ENCODE measurements at regions of chr5 and their contacts with region 1.

Region 1: GRCh38 chr5:59367791-59368394 is 525.6 kb downstream of the PDE4D start:
- DNase-seq: peak in 1 of 2 donors; percentile 50
- ATAC-seq: peak; percentile 57 to 63
- H3K4me3 ChIP-seq: no peak overlapping the region
- H3K27ac ChIP-seq: peak overlapping the region in 3 of 4 donors; percentile 82 to 86 (median 84)
- H3K4me1 ChIP-seq: peaks cover 44 to 46% of the 10 kb centered on the region in 2 donors
- H3K27me3 ChIP-seq: no peaks in the 10 kb centered on the region
- CTCF ChIP-seq: peak; percentile 44 to 75 (median 66)
- POLR2A ChIP-seq: no peak

Region 2: DNA sequence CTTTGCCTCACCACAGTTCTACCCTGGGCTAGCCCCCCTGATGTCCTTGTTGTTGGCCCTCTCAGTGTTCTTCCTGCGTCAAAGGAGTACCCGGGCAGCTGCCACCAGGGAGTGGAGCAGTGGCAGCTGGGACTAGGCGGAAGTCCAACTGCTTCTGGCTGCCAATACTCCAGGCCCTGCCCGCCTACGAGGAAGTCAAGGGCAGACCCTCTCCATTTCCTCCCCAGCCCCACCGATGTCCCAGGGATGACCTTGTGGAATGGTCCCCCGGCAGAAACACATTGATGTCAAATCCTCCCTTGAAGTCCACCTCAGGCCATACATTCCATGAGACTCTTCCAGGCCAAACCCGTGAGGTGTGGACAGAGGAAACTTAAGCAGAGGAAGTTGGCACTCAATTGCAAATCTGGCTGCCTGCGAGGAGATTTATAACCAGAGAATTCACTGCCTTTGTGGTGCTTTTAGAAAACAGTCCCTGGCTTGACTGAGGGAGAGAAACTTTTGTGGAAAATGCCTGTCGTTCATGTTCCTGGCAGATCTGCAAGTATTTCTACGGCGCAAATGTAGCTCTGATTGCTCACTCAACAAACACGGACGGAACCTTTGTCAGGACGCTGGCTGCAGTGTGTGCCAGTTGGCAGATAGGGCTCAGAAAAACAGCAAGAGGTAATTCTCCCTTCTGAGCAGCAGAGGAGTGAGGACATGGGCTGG is 445.3 kb before region 1 on chr5:
- in situ Hi-C with region 1: loop called in 1 of 4 experiments (anchors 25 kb)
- intact Hi-C with region 1: no loop called
- DNase-seq: peak; percentile 75 to 94
- ATAC-seq: peak; percentile 91 to 93
- H3K4me3 ChIP-seq: peak overlapping the region; percentile 33 to 40 (median 38)
- H3K27ac ChIP-seq: peak overlapping the region; percentile 90 to 95 (median 92)
- H3K4me1 ChIP-seq: peaks cover 61% of the 10 kb centered on the region in 2 donors
- H3K27me3 ChIP-seq: no peaks in the 10 kb centered on the region
- CTCF ChIP-seq: peak in 1 of 5 experiments; percentile 12
- POLR2A ChIP-seq: peak in 1 of 2 donors; percentile 20

Region 3: DNA sequence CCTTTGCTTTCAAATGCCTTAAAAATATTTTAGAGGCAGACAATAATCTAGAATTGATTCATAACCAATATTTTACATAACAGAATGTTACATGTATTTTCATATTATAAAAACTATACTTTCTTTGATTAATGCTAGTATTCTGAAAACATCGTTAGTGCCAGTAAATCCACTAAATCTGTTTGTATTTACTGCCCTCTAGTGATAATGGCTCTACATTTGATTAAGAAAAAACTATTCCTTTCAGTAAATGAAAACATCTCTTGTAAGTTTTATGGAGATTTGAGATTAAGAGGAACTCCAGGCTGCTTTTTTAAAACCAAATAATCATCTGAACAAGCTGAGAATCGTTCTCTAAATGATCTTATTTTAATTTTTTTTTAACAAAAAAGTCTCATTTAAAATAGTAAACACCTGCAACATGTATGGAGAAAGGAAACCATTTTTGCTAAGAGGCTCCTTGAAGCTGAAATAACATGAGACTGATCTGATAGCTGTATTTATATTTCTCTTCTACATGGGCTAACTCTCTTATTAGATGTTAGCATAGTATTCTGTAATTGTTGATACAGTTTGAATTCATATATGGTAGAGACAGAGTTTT is 360.3 kb before region 1 on chr5:
- in situ Hi-C with region 1: no loop called
- intact Hi-C with region 1: loop called (anchors 10 kb)
- DNase-seq: no peak
- ATAC-seq: no peak
- H3K4me3 ChIP-seq: no peak overlapping the region
- H3K27ac ChIP-seq: peak overlapping the region; percentile 58 to 79 (median 68)
- H3K4me1 ChIP-seq: peaks cover 69 to 76% of the 10 kb centered on the region in 2 donors
- H3K27me3 ChIP-seq: no peaks in the 10 kb centered on the region
- CTCF ChIP-seq: peak in 3 of 5 experiments; percentile 36 to 49 (median 46)
- POLR2A ChIP-seq: no peak

Region 4: GRCh38 chr5:59039296-59040023 is 328.4 kb before region 1 on chr5:
- in situ Hi-C with region 1: loop called (anchors 25 kb)
- intact Hi-C with region 1: loop called (anchors 5 kb)
- DNase-seq: peak; percentile 53 to 74
- ATAC-seq: peak; percentile 24 to 35
- H3K4me3 ChIP-seq: peak overlapping the region; percentile 75 to 93 (median 79)
- H3K27ac ChIP-seq: peak overlapping the region; percentile 83 to 93 (median 91)
- H3K4me1 ChIP-seq: peaks cover 48 to 71% of the 10 kb centered on the region in 2 donors
- H3K27me3 ChIP-seq: no peaks in the 10 kb centered on the region
- CTCF ChIP-seq: no peak
- POLR2A ChIP-seq: peak; percentile 65 to 76

Region 5: DNA sequence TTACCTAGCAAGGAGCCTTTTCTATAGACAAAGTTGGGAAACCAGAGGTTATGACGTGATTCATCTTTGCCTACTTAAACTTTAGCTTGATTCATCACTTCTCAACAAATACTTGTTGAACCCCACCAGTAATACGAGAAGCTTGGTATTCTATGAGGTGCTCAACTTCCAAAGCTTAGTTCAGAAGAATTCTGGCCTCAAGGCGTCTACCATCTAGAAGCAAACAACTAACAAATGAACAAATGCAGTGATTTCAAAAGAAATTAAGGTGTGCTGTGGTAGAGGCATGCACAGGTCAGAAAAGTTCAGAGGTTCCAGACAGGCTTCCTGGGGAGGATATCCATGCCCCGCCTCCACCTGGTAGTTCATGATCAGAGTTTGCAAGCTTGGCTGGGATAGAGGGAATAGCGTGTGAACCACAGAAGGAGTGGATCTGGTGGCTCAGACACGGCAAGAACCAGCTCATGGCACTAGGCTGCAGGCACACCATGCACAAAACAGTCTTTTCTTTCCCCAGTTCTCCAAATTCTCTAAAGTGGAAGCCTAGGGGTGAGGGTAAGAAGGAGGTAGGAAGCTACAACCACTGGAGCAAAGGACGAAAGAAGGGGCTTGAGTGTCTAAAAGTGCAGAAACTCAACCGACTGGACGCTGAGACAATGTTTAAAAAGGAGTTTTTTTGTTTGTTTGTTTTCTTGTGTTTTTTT is 312.0 kb before region 1 on chr5:
- in situ Hi-C with region 1: no loop called
- intact Hi-C with region 1: no loop called
- DNase-seq: no peak
- ATAC-seq: no peak
- H3K4me3 ChIP-seq: no peak overlapping the region
- H3K27ac ChIP-seq: no peak overlapping the region
- H3K4me1 ChIP-seq: no peaks in the 10 kb centered on the region
- H3K27me3 ChIP-seq: no peaks in the 10 kb centered on the region
- CTCF ChIP-seq: no peak
- POLR2A ChIP-seq: no peak

Region 6: GRCh38 chr5:59188419-59189225 is 179.3 kb before region 1 on chr5:
- in situ Hi-C with region 1: loop called in 2 of 4 experiments (anchors 10 kb)
- intact Hi-C with region 1: loop called (anchors 2 kb)
- DNase-seq: peak; percentile 55 to 69
- ATAC-seq: peak; percentile 40 to 53
- H3K4me3 ChIP-seq: peak overlapping the region; percentile 40 to 46 (median 40)
- H3K27ac ChIP-seq: peak overlapping the region; percentile 53 to 70 (median 60)
- H3K4me1 ChIP-seq: peaks cover 41 to 64% of the 10 kb centered on the region in 2 donors
- H3K27me3 ChIP-seq: no peaks in the 10 kb centered on the region
- CTCF ChIP-seq: peak; percentile 81 to 87 (median 83)
- POLR2A ChIP-seq: no peak

Region 7: DNA sequence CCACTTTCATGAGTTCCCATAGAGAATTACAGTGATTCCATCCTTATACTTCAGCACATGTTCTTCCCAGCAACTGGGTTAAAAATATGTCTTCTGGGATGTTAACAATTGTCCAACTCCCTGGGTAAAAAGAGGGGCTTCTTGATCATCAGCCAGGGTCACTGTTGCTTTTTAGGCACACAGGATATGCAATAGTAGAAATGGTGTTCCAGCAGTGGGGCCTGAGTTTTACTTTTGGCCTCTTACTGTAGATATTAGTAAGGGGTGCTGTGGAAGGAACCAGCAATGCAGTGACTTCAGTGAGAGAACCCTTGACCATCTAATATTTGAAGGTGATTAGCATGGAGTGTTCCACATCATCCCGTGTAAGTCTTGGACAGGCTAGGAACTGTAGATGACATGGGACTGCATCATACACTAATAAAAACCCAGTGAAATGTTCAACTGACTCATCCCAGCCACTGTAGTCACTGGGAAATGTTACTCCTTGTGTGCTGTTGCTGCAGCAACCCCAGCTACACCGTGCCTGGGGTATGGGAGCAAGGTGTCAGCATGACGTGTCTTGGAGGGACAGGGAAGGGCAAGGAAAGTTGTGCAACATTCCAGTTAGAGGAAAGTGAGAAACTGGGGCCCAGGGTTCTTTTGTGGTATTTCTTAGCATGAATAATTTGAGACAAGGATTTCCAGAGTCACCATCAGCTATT is 174.1 kb before region 1 on chr5:
- in situ Hi-C with region 1: loop called in 2 of 4 experiments (anchors 10 kb)
- intact Hi-C with region 1: loop called (anchors 2 kb)
- DNase-seq: peak; percentile 63 to 84
- ATAC-seq: peak; percentile 80 to 86
- H3K4me3 ChIP-seq: no peak overlapping the region
- H3K27ac ChIP-seq: peak overlapping the region; percentile 70 to 76 (median 71)
- H3K4me1 ChIP-seq: peaks cover 29 to 61% of the 10 kb centered on the region in 2 donors
- H3K27me3 ChIP-seq: no peaks in the 10 kb centered on the region
- CTCF ChIP-seq: no peak
- POLR2A ChIP-seq: no peak

Region 8: GRCh38 chr5:59445741-59446140 is 77.8 kb after region 1 on chr5:
- in situ Hi-C with region 1: no loop called
- intact Hi-C with region 1: no loop called
- DNase-seq: no peak
- ATAC-seq: no peak
- H3K4me3 ChIP-seq: no peak overlapping the region
- H3K27ac ChIP-seq: no peak overlapping the region
- H3K4me1 ChIP-seq: no peaks in the 10 kb centered on the region
- H3K27me3 ChIP-seq: no peaks in the 10 kb centered on the region
- CTCF ChIP-seq: no peak
- POLR2A ChIP-seq: no peak

Region 9: GRCh38 chr5:59587489-59588337 is 219.8 kb after region 1 on chr5:
- in situ Hi-C with region 1: no loop called
- intact Hi-C with region 1: loop called (anchors 5 kb)
- DNase-seq: peak; percentile 71 to 88
- ATAC-seq: peak; percentile 53 to 68
- H3K4me3 ChIP-seq: peak overlapping the region; percentile 63 to 74 (median 67)
- H3K27ac ChIP-seq: peak overlapping the region; percentile 78 to 92 (median 88)
- H3K4me1 ChIP-seq: peaks cover 8 to 28% of the 10 kb centered on the region in 2 donors
- H3K27me3 ChIP-seq: no peaks in the 10 kb centered on the region
- CTCF ChIP-seq: peak in 2 of 5 experiments; percentile 8 to 42
- POLR2A ChIP-seq: peak; percentile 60 to 84

Measured in gastrocnemius medialis (tissue), 4 donors.